Vagina (tissue), 2 donors: ENCODE measurements at regions of chr3 and their contacts with region 1.

Region 1: GRCh38 chr3:15332405-15333098 is at the start of gene SH3BP5:
- DNase-seq: no peak
- H3K4me3 ChIP-seq: peak within 1 kb of the TSS; percentile 79 to 87
- H3K27ac ChIP-seq: peak within 1 kb of the TSS; percentile 95
- H3K4me1 ChIP-seq: peaks cover 38% of the 10 kb centered on the region
- H3K27me3 ChIP-seq: no peaks in the 10 kb centered on the region
- CTCF ChIP-seq: peak; percentile 57 to 74 (median 66)
- POLR2A ChIP-seq: peak in 1 of 2 donors; percentile 88
- total RNA-seq, gene SH3BP5: 78.6 TPM

Region 2: GRCh38 chr3:15263120-15263519 is 69.4 kb before region 1 on chr3:
- intact Hi-C with region 1: loop called (anchors 2 kb)
- DNase-seq: peak in 1 of 2 donors; percentile 86
- H3K4me3 ChIP-seq: no peak overlapping the region
- H3K27ac ChIP-seq: peak overlapping the region; percentile 70
- H3K4me1 ChIP-seq: peaks cover 38% of the 10 kb centered on the region
- H3K27me3 ChIP-seq: no peaks in the 10 kb centered on the region
- CTCF ChIP-seq: no peak
- POLR2A ChIP-seq: no peak

Region 3: DNA sequence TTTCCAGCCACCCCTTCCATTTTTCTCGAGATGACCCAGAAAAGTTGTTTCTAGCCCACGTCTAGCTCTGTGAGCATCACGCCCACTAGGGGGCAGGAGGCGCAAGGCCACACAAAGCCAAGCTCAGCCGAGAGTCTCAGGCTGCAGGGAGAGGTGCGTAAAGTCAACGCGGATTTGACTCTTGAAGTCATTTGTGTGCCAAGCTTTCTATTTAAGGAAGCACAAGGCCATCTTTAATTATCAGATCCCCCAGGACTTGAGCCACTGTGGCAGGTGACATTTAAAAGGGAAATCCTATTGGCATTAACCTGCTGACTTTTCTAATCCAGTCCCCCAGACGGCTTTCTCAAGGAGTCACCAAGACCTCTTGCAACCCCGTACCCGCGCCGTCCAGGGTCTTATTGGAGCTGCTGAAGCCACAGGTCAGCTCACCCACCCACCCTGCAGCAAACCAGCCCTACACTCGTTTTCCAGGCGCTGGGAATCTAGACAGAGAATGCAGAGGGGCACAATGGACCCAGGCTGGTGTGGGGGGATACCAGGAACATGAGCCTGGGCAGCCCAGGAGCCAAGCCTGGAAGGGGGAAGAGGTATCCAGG is 64.4 kb before region 1 on chr3:
- intact Hi-C with region 1: loop called (anchors 2 kb)
- DNase-seq: peak; percentile 90 to 93
- H3K4me3 ChIP-seq: no peak overlapping the region
- H3K27ac ChIP-seq: peak overlapping the region; percentile 81
- H3K4me1 ChIP-seq: peaks cover 58% of the 10 kb centered on the region
- H3K27me3 ChIP-seq: no peaks in the 10 kb centered on the region
- CTCF ChIP-seq: peak; percentile 83 to 95 (median 93)
- POLR2A ChIP-seq: no peak

Region 4: DNA sequence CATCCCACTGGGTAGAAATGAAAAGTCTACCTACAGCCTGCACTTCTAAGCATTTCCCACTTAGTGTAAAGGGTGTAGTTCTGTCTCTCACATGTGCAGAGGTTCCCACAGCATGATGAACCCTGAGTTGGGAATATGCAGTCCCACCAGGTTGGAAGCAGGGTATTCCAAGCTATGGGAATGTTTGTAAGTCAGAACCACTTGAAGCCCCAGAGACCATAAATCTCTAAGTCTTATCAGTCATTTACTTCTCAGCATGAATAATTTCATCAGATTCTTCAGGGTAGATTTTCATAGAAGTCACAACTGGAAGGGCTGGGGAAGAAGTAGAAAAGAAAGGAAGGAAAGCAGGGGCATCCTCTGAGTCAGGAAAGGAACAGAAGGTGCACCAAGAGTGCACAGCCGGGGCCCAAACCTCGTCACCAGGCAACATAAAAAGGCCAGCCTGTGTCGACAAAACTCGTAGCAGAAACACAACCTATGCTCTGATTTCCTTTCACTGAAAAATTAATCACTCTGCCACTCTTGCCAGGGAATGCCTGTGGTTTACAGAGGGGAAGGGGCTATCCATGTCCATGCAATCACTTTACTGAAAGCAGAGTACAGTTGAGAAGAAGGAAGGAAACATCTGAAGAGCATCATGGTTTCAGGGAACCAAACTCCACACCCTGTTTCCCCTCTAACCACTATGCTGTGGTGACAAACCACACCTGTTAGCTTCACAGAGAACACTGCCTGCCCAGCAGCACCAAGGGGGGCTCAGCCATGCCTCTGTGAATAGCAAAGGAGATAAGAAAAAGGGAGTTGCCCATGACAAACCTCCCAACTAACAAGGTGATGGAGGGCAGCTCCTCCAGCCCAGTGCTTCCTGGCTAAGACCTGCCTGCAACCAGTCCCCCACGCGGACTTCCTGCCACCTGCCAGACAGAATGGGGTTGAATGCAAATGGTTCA is 40.7 kb before region 1 on chr3:
- intact Hi-C with region 1: loop called (anchors 5 kb)
- DNase-seq: no peak
- H3K4me3 ChIP-seq: no peak overlapping the region
- H3K27ac ChIP-seq: peak overlapping the region; percentile 74
- H3K4me1 ChIP-seq: peaks cover 83% of the 10 kb centered on the region
- H3K27me3 ChIP-seq: no peaks in the 10 kb centered on the region
- CTCF ChIP-seq: no peak
- POLR2A ChIP-seq: no peak

Region 5: DNA sequence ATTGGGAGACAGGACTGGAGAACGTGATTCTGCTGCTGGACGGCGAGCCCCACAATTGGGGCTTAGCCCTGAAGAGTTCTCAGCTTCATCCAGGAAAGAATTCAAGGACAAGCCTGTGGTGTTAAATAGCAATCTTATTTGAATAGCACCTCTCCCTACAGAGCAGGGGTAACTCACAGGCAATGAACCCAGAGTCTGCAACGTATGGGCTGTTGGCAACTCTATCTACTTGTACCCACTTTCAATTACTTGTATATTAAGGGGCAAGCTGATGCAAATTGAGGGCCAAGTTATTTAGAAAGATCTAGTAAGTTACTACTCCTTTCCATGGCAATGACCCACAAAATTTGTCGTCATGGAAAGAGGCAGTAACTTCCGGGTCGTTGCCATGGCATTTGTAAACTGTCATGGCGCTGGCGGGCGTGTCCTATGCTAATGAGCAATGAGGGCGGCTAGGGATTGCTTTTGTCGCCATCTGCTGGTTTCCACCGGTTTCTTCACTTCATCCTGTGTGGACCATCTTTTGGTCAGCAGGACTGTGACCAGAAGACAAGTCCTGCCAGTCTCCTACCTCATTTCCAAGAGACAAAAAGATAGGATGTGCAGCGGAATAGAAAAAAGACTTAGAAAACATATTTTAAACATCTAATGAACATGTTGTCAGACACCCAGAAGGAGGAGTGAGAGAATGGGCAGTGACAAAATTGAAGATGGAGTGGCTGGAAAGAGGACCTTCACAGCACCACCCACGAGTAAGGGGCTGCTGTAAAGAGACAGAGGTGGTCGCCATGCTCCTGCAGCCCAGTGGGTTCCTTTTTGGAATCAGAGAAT is 45.6 kb after region 1 on chr3:
- intact Hi-C with region 1: loop called (anchors 2 kb)
- DNase-seq: peak in 1 of 2 donors; percentile 95
- H3K4me3 ChIP-seq: no peak overlapping the region
- H3K27ac ChIP-seq: peak overlapping the region; percentile 61
- H3K4me1 ChIP-seq: peaks cover 5% of the 10 kb centered on the region
- H3K27me3 ChIP-seq: no peaks in the 10 kb centered on the region
- CTCF ChIP-seq: peak; percentile 67 to 97 (median 91)
- POLR2A ChIP-seq: no peak